MCF 10A (cell line): ENCODE measurements at regions of chr20 and their contacts with region 1.

Region 1: DNA sequence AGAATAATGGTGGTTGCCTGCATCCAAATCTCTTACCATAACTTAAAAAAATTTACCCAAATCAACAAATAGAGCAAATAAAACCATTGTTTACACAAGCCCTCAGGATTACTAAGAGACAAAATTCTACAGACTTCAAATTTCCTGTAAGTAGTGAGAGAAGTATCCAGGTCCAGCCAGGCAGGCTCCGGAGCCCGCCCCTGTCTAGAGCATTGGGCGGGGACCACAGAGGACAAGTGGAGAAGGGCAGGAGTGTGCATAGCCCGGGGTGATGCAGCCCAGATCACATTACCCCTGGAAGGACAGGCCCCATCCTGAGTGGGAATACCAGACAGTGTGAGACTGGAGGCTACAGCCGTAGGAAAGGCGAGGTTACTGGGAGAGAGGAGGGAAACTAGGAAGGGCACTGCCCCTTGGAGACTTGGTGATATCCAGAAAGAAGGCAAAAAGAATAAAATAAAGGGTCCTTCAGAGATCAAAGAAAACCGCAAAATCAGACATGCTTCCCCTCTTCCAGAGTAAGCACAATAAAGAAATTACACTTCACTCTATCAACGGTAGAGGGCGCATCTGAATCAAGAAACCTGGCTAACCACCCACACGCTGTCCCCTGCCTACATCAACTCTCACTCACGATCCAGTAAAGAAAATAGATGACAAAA is 26.6 kb downstream of the RIN2 start:
- DNase-seq: peak; percentile 89
- H3K4me3 Mint-ChIP-seq: peak overlapping the region; percentile 51
- H3K27ac Mint-ChIP-seq: peak overlapping the region; percentile 86
- H3K4me1 Mint-ChIP-seq: peaks cover 60% of the 10 kb centered on the region
- H3K27me3 Mint-ChIP-seq: no peaks in the 10 kb centered on the region
- CTCF ChIP-seq: peak; percentile 68

Region 2: GRCh38 chr20:19205977-19206396 is 578.7 kb before region 1 on chr20:
- CTCF ChIA-PET with region 1: no interaction called
- POLR2A ChIA-PET with region 1: no interaction called
- intact Hi-C with region 1: no loop called
- DNase-seq: peak; percentile 69
- H3K4me3 Mint-ChIP-seq: no peak overlapping the region
- H3K27ac Mint-ChIP-seq: no peak overlapping the region
- H3K4me1 Mint-ChIP-seq: no peaks in the 10 kb centered on the region
- H3K27me3 Mint-ChIP-seq: peaks cover 25% of the 10 kb centered on the region
- CTCF ChIP-seq: peak; percentile 84

Region 3: DNA sequence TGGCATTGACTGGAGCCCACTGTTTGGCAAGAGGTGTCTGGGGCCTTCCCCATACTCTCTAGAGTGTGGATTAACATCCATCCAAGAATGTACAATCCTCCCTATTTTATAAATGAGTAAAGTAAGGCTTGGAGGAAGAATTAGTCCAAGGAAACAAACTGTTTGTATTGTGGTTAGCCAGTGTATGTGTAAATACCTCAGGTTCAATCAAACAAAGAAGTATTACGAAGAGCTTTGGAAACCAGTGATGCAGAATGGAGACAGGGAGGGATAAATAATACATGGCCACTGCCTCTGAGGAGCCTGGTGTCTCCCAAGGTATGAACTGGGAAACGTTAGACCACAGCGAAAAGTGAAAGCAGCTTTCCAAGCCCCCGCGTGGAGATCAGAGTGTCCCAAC is 253.2 kb before region 1 on chr20:
- CTCF ChIA-PET with region 1: no interaction called
- POLR2A ChIA-PET with region 1: no interaction called
- intact Hi-C with region 1: no loop called
- DNase-seq: no peak
- H3K4me3 Mint-ChIP-seq: no peak overlapping the region
- H3K27ac Mint-ChIP-seq: no peak overlapping the region
- H3K4me1 Mint-ChIP-seq: no peaks in the 10 kb centered on the region
- H3K27me3 Mint-ChIP-seq: no peaks in the 10 kb centered on the region
- CTCF ChIP-seq: no peak

Region 4: DNA sequence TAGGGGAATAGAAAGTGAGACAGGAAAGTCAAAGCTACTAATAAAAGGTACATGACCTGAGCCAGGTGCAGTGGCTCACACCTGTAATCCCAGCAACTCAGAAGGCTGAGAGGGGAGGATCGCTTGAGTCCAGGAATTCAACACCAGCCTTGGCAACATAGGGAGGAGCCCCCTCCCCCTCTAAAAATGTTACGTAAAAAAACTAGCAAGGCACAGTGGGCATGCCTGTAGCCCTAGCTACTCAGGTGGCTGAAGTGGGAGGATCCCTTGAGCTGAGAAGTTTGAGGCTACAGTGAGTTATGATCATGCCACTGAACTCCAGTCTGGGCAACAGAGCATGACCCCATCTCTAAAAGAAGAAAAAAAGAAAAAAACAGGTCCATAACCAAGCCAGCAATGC is 212.6 kb before region 1 on chr20:
- CTCF ChIA-PET with region 1: no interaction called
- POLR2A ChIA-PET with region 1: no interaction called
- intact Hi-C with region 1: no loop called
- DNase-seq: no peak
- H3K4me3 Mint-ChIP-seq: no peak overlapping the region
- H3K27ac Mint-ChIP-seq: no peak overlapping the region
- H3K4me1 Mint-ChIP-seq: no peaks in the 10 kb centered on the region
- H3K27me3 Mint-ChIP-seq: peaks cover 11% of the 10 kb centered on the region
- CTCF ChIP-seq: no peak

Region 5: GRCh38 chr20:19757487-19758132 is 27.0 kb before region 1 on chr20:
- CTCF ChIA-PET with region 1: interaction called, 12 read pairs
- POLR2A ChIA-PET with region 1: interaction called, 10 read pairs
- intact Hi-C with region 1: no loop called
- DNase-seq: peak; percentile 68
- H3K4me3 Mint-ChIP-seq: peak overlapping the region; percentile 81
- H3K27ac Mint-ChIP-seq: peak overlapping the region; percentile 70
- H3K4me1 Mint-ChIP-seq: peaks cover 35% of the 10 kb centered on the region
- H3K27me3 Mint-ChIP-seq: no peaks in the 10 kb centered on the region
- CTCF ChIP-seq: no peak

Region 6: GRCh38 chr20:19802492-19803158 is 18.0 kb after region 1 on chr20:
- CTCF ChIA-PET with region 1: interaction called, 65 read pairs
- POLR2A ChIA-PET with region 1: interaction called, 9 read pairs
- intact Hi-C with region 1: no loop called
- DNase-seq: peak; percentile 72
- H3K4me3 Mint-ChIP-seq: no peak overlapping the region
- H3K27ac Mint-ChIP-seq: peak overlapping the region; percentile 9
- H3K4me1 Mint-ChIP-seq: peaks cover 18% of the 10 kb centered on the region
- H3K27me3 Mint-ChIP-seq: no peaks in the 10 kb centered on the region
- CTCF ChIP-seq: peak; percentile 21

Region 7: DNA sequence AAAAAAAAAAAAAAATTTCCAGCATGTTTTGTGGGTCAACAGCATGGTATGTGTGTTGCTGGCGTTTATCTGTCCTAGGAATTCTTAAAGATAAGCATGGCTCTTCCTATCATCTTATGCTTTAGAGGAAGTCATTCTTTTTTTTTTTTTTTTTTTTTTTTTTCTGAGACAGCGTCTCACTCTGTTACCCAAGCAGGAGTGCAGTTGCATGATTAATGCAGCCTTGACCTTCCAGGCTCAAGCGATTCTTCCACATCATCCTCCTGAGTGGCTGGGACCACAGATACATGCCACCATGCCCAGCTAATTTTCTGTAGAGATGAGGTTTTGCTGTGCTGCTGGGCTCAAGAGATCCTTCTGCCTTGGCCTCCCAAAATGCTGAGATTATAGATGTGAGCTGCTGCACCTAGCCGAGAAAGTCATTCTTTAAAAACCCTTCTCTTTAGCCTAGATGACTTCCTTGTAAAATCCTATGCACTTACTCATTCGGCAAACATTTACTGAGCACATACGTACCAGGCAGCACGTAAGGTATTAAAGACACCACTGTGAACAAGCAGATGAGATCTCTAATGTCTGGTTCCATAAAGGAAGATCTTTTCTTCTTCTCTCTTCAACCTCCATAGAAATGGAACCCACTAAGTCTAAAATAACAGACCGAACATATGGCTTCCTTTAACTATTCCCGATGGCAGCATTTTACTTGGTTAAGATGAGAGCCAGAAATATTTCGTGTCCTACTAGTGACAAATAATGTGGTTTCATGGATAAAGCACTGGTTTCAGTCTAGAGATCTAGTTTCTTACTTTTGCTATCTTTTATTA is 95.8 kb after region 1 on chr20:
- CTCF ChIA-PET with region 1: interaction called, 48 read pairs
- POLR2A ChIA-PET with region 1: interaction called, 32 read pairs
- intact Hi-C with region 1: no loop called
- DNase-seq: peak; percentile 52
- H3K4me3 Mint-ChIP-seq: peak overlapping the region; percentile 35
- H3K27ac Mint-ChIP-seq: peak overlapping the region; percentile 90
- H3K4me1 Mint-ChIP-seq: peaks cover 17% of the 10 kb centered on the region
- H3K27me3 Mint-ChIP-seq: no peaks in the 10 kb centered on the region
- CTCF ChIP-seq: no peak

Region 8: DNA sequence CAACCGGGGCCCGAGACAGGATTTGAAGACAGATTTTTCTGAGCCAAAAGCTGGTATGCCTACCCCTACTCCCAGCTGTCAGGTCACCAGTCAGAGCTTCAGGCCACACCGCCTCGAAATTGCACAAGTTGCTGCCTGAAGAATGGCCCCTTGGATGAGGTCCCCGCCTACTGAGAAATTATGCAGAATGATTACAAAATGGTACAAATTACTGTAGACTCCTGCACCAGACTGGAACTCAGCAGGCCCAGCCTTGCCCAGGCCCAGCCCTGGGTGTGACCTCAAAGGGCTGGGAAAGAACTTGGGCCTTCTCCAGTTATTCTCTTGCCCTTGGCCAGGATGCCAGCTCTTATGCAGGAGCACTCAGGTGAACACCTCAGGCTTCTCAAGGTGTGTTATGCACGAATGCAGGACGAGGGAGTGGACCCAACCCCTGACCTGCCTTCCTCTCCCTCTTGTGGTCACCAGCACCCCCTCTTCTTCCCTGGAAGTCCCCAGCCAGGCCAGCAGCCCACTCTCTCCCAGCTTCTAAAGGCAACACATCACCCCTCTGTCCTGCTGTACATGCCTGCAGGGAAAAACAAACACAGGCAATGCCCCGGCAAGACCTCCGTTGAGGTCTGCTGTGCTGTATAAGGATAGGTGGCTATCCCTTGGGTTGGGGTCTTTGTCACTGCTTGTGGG is 143.8 kb after region 1 on chr20:
- CTCF ChIA-PET with region 1: interaction called, 11 read pairs
- POLR2A ChIA-PET with region 1: interaction called, 7 read pairs
- intact Hi-C with region 1: no loop called
- DNase-seq: peak; percentile 97
- H3K4me3 Mint-ChIP-seq: peak overlapping the region; percentile 14
- H3K27ac Mint-ChIP-seq: peak overlapping the region; percentile 90
- H3K4me1 Mint-ChIP-seq: peaks cover 19% of the 10 kb centered on the region
- H3K27me3 Mint-ChIP-seq: no peaks in the 10 kb centered on the region
- CTCF ChIP-seq: no peak

Region 9: DNA sequence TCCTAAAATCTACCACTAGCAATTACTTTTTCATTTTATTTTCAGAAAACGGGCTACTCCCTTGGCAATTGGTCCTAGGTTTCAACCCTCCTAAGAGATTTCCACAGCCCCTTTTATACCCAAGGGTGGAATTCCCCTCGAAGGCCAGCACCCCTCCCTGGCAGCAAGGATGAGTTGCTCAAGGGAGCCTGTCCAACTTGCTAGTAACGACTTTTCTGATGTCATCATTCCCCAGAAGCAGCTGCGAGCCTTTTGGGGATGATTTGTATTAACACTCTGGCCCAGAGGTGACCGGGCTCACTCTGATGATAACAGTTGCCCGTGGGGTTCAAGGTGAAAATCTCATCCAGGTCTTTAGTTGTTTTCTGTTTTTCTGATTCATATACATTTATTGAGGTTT is 201.8 kb after region 1 on chr20:
- CTCF ChIA-PET with region 1: interaction called, 11 read pairs
- POLR2A ChIA-PET with region 1: interaction called, 92 read pairs
- intact Hi-C with region 1: no loop called
- DNase-seq: peak; percentile 58
- H3K4me3 Mint-ChIP-seq: no peak overlapping the region
- H3K27ac Mint-ChIP-seq: peak overlapping the region; percentile 84
- H3K4me1 Mint-ChIP-seq: peaks cover 35% of the 10 kb centered on the region
- H3K27me3 Mint-ChIP-seq: no peaks in the 10 kb centered on the region
- CTCF ChIP-seq: no peak